K562 (cell line): ENCODE measurements at regions of chr1 and their contacts with region 1.

Region 1: GRCh38 chr1:67053785-67054772 is at the start of gene SLC35D1:
- DNase-seq: peak; percentile 73 to 86 (median 82)
- ATAC-seq: peak; percentile 84
- H3K4me3 ChIP-seq: peak within 1 kb of the TSS; percentile 71
- H3K27ac ChIP-seq: peak within 1 kb of the TSS; percentile 79
- H3K4me1 ChIP-seq: peaks cover 7 to 15% of the 10 kb centered on the region in 2 experiments; a peak in 3 of 5 replicates
- H3K27me3 ChIP-seq: no peaks in the 10 kb centered on the region
- CTCF ChIP-seq: no peak
- EP300 ChIP-seq: no peak
- POLR2A ChIP-seq: peak; percentile 87
- RAD21 ChIP-seq: no peak
- polyA plus RNA-seq, gene SLC35D1: 2.3 to 3.4 TPM

Region 2: DNA sequence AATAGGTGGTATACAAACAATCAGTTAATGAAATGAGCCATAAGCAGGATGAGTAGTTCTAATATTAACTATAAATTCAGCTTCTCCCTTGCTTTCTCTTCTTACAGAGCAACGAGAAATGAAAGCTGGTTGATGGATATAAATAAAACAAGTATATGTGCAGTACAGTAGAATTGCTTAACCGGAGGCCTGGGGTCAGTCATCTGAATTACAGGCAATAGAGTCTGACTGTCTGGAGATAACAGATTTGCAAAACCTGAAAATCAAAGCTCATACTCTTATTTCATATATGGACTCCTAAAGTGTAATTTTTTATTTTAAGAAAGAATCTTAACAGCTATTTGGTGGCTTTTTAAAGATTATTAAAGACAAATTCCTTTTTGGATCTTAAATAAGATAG is 563.3 kb before region 1 on chr1:
- CTCF ChIA-PET with region 1: no interaction called
- POLR2A ChIA-PET with region 1: no interaction called
- in situ Hi-C with region 1: no loop called
- intact Hi-C with region 1: no loop called
- DNase-seq: no peak
- ATAC-seq: no peak
- H3K4me3 ChIP-seq: no peak overlapping the region
- H3K27ac ChIP-seq: no peak overlapping the region
- H3K4me1 ChIP-seq: no peaks in the 10 kb centered on the region
- H3K27me3 ChIP-seq: no peaks in the 10 kb centered on the region
- CTCF ChIP-seq: no peak
- EP300 ChIP-seq: no peak
- POLR2A ChIP-seq: no peak
- RAD21 ChIP-seq: no peak

Region 3: GRCh38 chr1:67100833-67101232 is 46.8 kb after region 1 on chr1:
- CTCF ChIA-PET with region 1: no interaction called
- POLR2A ChIA-PET with region 1: no interaction called
- in situ Hi-C with region 1: loop called (anchors 5 kb)
- intact Hi-C with region 1: no loop called
- DNase-seq: no peak
- ATAC-seq: peak; percentile 57
- H3K4me3 ChIP-seq: no peak overlapping the region
- H3K27ac ChIP-seq: peak overlapping the region; percentile 14; the same call in 1 of the 3 replicates
- H3K4me1 ChIP-seq: peaks cover 0 to 12% of the 10 kb centered on the region in 2 experiments; a peak in 2 of 5 replicates
- H3K27me3 ChIP-seq: no peaks in the 10 kb centered on the region
- CTCF ChIP-seq: no peak
- EP300 ChIP-seq: no peak
- POLR2A ChIP-seq: no peak
- RAD21 ChIP-seq: no peak

Region 4: DNA sequence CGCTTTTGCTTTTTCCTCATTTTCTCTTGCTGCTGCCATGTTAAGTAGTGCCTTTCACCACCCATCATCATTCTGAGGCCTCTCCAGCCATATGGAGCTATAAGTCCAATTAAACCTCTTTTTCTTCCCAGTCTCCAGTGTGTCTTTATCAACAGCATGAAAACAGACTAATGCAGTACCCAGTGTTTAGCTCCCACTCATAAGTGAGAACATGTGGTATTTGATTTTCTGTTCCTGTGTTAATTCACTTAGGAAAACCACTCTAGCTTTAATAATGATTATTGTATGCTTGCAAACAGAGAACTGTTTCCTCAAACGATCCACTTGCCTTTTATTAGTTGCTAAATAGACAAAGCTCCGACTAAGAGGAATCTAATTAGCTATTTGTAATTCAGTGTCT is 155.4 kb after region 1 on chr1:
- CTCF ChIA-PET with region 1: no interaction called
- POLR2A ChIA-PET with region 1: no interaction called
- in situ Hi-C with region 1: no loop called
- intact Hi-C with region 1: loop called (anchors 5 kb)
- DNase-seq: no peak
- ATAC-seq: peak; percentile 4; the same call in 1 of the 3 replicates
- H3K4me3 ChIP-seq: peak overlapping the region; percentile 50
- H3K27ac ChIP-seq: no peak overlapping the region
- H3K4me1 ChIP-seq: peaks cover 4 to 13% of the 10 kb centered on the region in 2 experiments; a peak in 1 of 5 replicates
- H3K27me3 ChIP-seq: no peaks in the 10 kb centered on the region
- CTCF ChIP-seq: no peak
- EP300 ChIP-seq: no peak
- POLR2A ChIP-seq: no peak
- RAD21 ChIP-seq: no peak